CD8-positive, alpha-beta memory T cell (primary cell): ENCODE measurements at regions of chr4 and their contacts with region 1.

Region 1: DNA sequence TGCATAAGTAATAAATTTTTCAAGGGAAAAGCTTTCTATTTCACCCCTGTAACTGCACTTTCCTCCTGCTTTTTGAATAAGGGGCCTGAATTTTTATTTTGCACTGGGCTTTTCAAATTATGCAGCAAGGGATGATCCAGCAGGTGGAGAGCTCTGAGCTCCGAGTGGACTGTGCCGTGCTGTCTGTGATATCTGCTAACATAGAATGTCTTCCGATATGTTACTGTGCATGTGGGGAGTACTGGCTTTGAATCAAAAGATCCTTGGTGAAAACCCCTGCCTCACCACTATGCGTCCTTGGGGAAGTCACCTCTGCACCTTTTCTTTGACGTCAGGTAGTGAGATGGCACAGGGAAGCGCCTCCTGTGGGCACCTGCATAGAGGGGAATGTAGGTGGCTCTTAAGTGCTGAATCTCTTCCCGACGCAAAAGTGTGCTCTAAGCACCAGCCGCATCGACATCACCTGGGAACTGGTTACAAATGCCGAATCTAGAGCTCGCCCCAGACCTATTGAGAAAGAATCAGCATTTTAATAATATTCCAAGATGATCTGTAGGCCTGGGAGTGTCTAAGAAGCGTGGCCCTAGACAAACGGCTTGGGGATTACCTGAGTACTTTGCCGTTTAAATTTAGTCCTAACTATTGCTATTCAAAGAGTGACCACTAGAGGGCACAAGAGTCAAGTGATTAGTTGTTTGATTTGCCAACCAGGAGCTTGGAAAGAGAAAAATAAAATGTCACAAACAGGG is 19.2 kb upstream of the WFS1 start:
- DNase-seq: peak in 2 of 5 donors; percentile 51 to 55
- H3K4me3 ChIP-seq: no peak overlapping the region
- H3K4me3 Mint-ChIP-seq: peak overlapping the region in 1 of 7 donors; percentile 41
- H3K27ac ChIP-seq: no peak overlapping the region
- H3K27ac Mint-ChIP-seq: no peak overlapping the region
- H3K4me1 ChIP-seq: peaks cover 4% of the 10 kb centered on the region
- H3K4me1 Mint-ChIP-seq: peaks cover 0 to 5% (median 3%) of the 10 kb centered on the region in 3 donors
- H3K27me3 ChIP-seq: peaks cover 6% of the 10 kb centered on the region
- H3K27me3 Mint-ChIP-seq: peaks cover 22 to 60% of the 10 kb centered on the region in 2 donors

Region 2: DNA sequence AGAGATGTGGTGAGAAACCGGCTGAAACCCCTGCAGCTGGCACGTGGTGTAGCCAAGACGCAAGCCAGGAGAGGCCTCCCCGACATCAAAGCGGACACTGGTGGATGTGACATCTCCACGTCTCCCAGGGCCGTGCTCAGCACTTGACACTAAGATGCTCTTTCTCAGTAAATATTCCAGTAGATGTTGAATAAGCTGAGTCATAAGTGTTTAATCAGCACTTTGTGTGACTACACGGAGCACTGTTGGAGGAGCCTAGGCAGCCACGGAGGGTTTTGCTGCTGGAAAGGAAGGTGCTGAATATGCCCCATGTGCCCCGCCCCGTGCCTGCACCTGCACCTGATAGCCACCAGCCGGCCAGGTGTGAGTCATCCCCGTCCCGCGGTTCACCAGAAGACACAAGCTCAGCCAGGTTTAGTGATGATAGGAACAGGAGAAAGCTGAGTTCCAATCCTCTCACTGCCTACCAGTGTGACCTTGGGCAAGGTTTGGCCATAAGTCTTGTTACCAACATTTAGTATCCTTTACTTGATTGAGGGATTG is 203.2 kb before region 1 on chr4:
- CTCF ChIA-PET with region 1: no interaction called
- POLR2A ChIA-PET with region 1: no interaction called
- DNase-seq: no peak
- H3K4me3 ChIP-seq: no peak overlapping the region
- H3K4me3 Mint-ChIP-seq: no peak overlapping the region
- H3K27ac ChIP-seq: no peak overlapping the region
- H3K27ac Mint-ChIP-seq: no peak overlapping the region
- H3K4me1 ChIP-seq: no peaks in the 10 kb centered on the region
- H3K4me1 Mint-ChIP-seq: peaks cover 0 to 22% (median 6%) of the 10 kb centered on the region in 3 donors
- H3K27me3 ChIP-seq: no peaks in the 10 kb centered on the region
- H3K27me3 Mint-ChIP-seq: peaks cover 3 to 4% of the 10 kb centered on the region in 2 donors

Region 3: GRCh38 chr4:6134612-6135220 is 115.7 kb before region 1 on chr4:
- CTCF ChIA-PET with region 1: interaction called, 18 read pairs
- POLR2A ChIA-PET with region 1: no interaction called
- DNase-seq: peak in 4 of 5 donors; percentile 47 to 77 (median 58)
- H3K4me3 ChIP-seq: no peak overlapping the region
- H3K4me3 Mint-ChIP-seq: peak overlapping the region in 2 of 7 donors; percentile 29 to 47
- H3K27ac ChIP-seq: no peak overlapping the region
- H3K27ac Mint-ChIP-seq: peak overlapping the region; percentile 1 to 87 (median 60)
- H3K4me1 ChIP-seq: peaks cover 6% of the 10 kb centered on the region
- H3K4me1 Mint-ChIP-seq: peaks cover 16 to 21% (median 16%) of the 10 kb centered on the region in 3 donors
- H3K27me3 ChIP-seq: no peaks in the 10 kb centered on the region
- H3K27me3 Mint-ChIP-seq: peaks cover 0 to 1% of the 10 kb centered on the region in 2 donors

Region 4: GRCh38 chr4:6264225-6264540 is 13.8 kb after region 1 on chr4:
- CTCF ChIA-PET with region 1: interaction called, 32 read pairs
- POLR2A ChIA-PET with region 1: no interaction called
- DNase-seq: peak in 1 of 5 donors; percentile 53
- H3K4me3 ChIP-seq: no peak overlapping the region
- H3K4me3 Mint-ChIP-seq: no peak overlapping the region
- H3K27ac ChIP-seq: no peak overlapping the region
- H3K27ac Mint-ChIP-seq: no peak overlapping the region
- H3K4me1 ChIP-seq: no peaks in the 10 kb centered on the region
- H3K4me1 Mint-ChIP-seq: peaks cover 4 to 5% (median 4%) of the 10 kb centered on the region in 3 donors
- H3K27me3 ChIP-seq: peaks cover 5% of the 10 kb centered on the region
- H3K27me3 Mint-ChIP-seq: peaks cover 16 to 24% of the 10 kb centered on the region in 2 donors

Region 5: DNA sequence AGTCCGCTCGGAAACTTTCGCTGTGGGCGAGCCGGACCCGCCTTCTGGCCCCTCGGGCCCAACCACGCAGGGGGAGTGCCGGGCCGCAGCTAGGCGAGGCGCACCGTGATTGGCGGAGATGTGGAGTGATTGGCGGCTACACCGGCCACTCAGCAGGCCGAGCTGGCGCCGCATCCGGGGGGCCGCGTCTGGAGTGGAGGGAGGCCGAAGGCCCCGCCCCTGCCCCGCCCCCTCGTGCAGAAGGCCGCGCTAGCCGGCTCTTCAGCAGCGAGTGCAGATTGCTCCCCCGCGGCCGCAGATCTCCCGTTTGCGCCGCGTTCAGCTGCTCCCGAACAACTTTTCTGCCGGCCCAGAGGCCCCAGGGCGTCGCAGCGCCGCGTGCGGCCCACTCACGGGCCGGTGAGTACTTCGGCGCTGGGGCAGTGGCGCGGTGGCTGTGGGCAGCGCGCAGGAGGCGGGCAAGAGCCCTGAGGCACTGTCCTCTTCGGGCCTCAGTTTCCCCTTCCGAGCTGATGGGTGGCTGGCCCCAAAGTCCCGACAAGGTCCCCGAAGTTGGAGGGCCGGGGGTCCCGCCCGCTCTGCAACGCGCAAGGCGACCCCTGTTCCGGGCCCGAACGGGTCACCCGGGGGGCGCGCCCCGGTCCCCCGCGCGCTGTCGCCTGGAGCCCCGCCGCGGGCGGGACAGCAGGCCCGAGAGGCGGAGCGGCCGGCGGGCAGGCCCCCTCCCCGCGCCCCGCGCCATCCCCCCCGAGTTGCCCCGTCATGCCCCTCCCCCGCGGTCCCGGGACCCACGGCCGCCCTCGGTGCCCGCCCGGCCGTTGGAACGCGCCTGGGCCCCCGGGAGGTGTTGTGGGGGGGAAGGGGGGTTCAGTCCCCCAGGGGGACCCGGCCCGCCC is 19.5 kb after region 1 on chr4 and contains the start of gene WFS1:
- CTCF ChIA-PET with region 1: interaction called, 20 read pairs
- POLR2A ChIA-PET with region 1: no interaction called
- DNase-seq: peak; percentile 95 to 98 (median 95)
- H3K4me3 ChIP-seq: peak within 1 kb of the TSS; percentile 67
- H3K4me3 Mint-ChIP-seq: peak within 1 kb of the TSS; percentile 81 to 90 (median 88)
- H3K27ac ChIP-seq: no peak within 1 kb of the TSS
- H3K27ac Mint-ChIP-seq: peak within 1 kb of the TSS; percentile 38 to 78 (median 52)
- H3K4me1 ChIP-seq: peaks cover 5% of the 10 kb centered on the region
- H3K4me1 Mint-ChIP-seq: peaks cover 9 to 22% (median 12%) of the 10 kb centered on the region in 3 donors
- H3K27me3 ChIP-seq: no peaks in the 10 kb centered on the region
- H3K27me3 Mint-ChIP-seq: peaks cover 0 to 8% of the 10 kb centered on the region in 2 donors
- total RNA-seq, gene WFS1: 5.1 TPM

Region 6: GRCh38 chr4:6308899-6309643 is 58.7 kb after region 1 on chr4:
- CTCF ChIA-PET with region 1: interaction called, 10 read pairs
- POLR2A ChIA-PET with region 1: no interaction called
- DNase-seq: peak in 3 of 5 donors; percentile 10 to 53 (median 26)
- H3K4me3 ChIP-seq: no peak overlapping the region
- H3K4me3 Mint-ChIP-seq: peak overlapping the region; percentile 44 to 77 (median 68)
- H3K27ac ChIP-seq: no peak overlapping the region
- H3K27ac Mint-ChIP-seq: peak overlapping the region in 1 of 8 donors; percentile 19
- H3K4me1 ChIP-seq: no peaks in the 10 kb centered on the region
- H3K4me1 Mint-ChIP-seq: peaks cover 5 to 15% (median 11%) of the 10 kb centered on the region in 3 donors
- H3K27me3 ChIP-seq: peaks cover 4% of the 10 kb centered on the region
- H3K27me3 Mint-ChIP-seq: peaks cover 31 to 61% of the 10 kb centered on the region in 2 donors

Region 7: DNA sequence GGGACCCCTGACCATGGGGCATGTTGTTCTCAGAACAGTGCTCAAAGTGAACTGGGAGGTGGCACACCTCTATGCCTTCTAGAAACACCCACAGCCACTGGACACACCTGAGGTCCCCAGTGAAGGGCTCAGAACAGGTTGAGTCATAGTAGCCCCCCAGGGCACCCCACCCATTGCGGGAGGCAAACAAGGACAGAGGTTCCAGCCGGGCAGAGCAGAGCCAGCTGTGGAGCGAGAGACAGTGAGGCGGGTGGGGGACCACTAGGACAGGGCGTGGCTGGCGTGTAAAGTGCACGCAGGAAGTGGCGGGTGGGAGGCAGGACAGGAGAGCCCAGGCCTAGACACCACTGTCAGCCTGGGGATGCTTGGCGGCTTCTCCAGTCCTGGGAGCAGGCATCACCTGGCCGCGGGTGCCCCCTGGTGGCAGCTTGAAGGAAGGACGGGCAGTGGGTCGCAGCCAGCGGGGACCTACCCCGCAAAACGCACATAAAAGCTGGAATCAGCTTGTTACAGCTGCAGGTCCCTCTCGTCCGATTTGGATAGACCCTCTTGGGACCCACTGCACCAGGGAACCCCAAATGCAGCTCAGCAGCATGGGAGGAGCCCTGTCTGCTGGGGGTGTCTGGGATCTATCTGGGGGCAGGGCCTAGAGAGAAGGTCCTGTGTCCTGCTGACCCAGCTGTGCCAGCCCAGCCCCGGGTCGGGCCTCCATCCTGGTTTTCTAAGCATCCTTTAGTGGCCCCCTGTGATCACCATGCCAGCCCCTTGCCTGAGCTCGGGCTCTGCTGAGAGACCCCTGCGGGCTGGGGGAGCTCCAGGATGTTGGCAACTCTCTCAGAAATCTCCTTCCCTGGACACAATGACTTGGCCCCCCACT is 76.9 kb after region 1 on chr4:
- CTCF ChIA-PET with region 1: interaction called, 205 read pairs
- POLR2A ChIA-PET with region 1: no interaction called
- DNase-seq: peak; percentile 65 to 83 (median 71)
- H3K4me3 ChIP-seq: no peak overlapping the region
- H3K4me3 Mint-ChIP-seq: no peak overlapping the region
- H3K27ac ChIP-seq: no peak overlapping the region
- H3K27ac Mint-ChIP-seq: no peak overlapping the region
- H3K4me1 ChIP-seq: no peaks in the 10 kb centered on the region
- H3K4me1 Mint-ChIP-seq: no peaks in the 10 kb centered on the region
- H3K27me3 ChIP-seq: no peaks in the 10 kb centered on the region
- H3K27me3 Mint-ChIP-seq: peaks cover 11 to 47% of the 10 kb centered on the region in 2 donors

Region 8: GRCh38 chr4:6427439-6428090 is 177.2 kb after region 1 on chr4:
- CTCF ChIA-PET with region 1: no interaction called
- POLR2A ChIA-PET with region 1: no interaction called
- DNase-seq: no peak
- H3K4me3 ChIP-seq: no peak overlapping the region
- H3K4me3 Mint-ChIP-seq: no peak overlapping the region
- H3K27ac ChIP-seq: no peak overlapping the region
- H3K27ac Mint-ChIP-seq: no peak overlapping the region
- H3K4me1 ChIP-seq: no peaks in the 10 kb centered on the region
- H3K4me1 Mint-ChIP-seq: peaks cover 0 to 4% (median 0%) of the 10 kb centered on the region in 3 donors
- H3K27me3 ChIP-seq: no peaks in the 10 kb centered on the region
- H3K27me3 Mint-ChIP-seq: peaks cover 17 to 38% of the 10 kb centered on the region in 2 donors

Region 9: GRCh38 chr4:6582889-6583490 is 332.6 kb after region 1 on chr4:
- CTCF ChIA-PET with region 1: no interaction called
- POLR2A ChIA-PET with region 1: no interaction called
- DNase-seq: no peak
- H3K4me3 ChIP-seq: no peak overlapping the region
- H3K4me3 Mint-ChIP-seq: no peak overlapping the region
- H3K27ac ChIP-seq: no peak overlapping the region
- H3K27ac Mint-ChIP-seq: no peak overlapping the region
- H3K4me1 ChIP-seq: no peaks in the 10 kb centered on the region
- H3K4me1 Mint-ChIP-seq: peaks cover 0 to 7% (median 4%) of the 10 kb centered on the region in 3 donors
- H3K27me3 ChIP-seq: no peaks in the 10 kb centered on the region
- H3K27me3 Mint-ChIP-seq: no peaks in the 10 kb centered on the region